A673 (cell line): ENCODE measurements at regions of chr7 and their contacts with region 1.

Region 1: DNA sequence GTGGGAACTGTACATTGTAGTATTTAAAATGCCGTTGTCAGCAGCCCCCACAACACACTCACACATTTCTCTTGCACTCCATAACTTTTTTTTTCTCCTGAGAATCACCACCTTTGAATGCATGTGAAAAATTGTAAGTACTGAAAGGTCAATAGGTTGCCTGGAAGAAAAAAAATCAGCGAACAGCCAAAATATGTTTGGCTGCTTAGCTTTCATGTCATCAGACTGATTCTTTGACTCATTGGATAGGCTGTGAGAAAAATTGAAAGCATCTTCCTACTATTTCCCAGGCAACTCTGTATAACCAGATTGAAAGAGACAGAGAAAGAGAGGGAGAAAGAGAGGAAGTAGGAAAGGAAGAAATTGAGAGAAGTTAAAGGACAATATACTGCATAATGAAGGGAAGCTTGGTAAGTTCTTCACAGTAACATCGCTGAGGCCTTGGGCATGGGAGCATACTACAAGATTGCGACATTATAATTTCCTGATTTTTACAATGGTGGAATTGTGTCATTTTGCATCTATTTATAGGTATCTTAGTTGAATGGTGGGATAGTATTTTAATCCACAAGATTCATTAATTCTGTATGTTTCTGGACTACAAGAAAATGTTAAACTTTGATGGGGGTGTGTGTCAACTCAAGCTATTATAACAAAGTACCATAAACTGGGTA is 249.3 kb upstream of the KCND2 start:
- DNase-seq: no peak
- H3K4me3 ChIP-seq: no peak overlapping the region
- H3K27ac ChIP-seq: no peak overlapping the region
- H3K4me1 ChIP-seq: no peaks in the 10 kb centered on the region
- H3K27me3 ChIP-seq: no peaks in the 10 kb centered on the region
- CTCF ChIP-seq: no peak

Region 2: DNA sequence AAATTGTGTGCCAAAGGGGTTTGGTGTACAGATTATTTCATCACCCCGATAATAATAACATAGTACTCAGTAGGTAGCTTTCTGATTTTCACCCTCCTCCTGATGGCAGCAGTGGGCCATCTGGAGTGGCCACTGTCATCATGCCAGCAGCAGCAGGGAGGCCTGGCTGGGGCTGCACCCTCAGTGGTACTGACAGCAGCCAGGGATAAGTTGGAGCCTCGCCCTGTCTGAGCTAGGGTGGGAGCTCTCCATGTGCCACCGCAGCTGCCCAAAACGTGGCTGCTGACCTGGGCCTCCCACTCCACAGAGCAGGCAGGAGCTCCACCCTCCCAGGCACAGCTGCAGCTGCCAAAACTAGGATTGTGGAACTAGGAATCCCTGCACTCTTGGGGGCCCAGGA is 451.5 kb before region 1 on chr7:
- CTCF ChIA-PET with region 1: no interaction called
- POLR2A ChIA-PET with region 1: no interaction called
- intact Hi-C with region 1: no loop called
- DNase-seq: no peak
- H3K4me3 ChIP-seq: no peak overlapping the region
- H3K27ac ChIP-seq: no peak overlapping the region
- H3K4me1 ChIP-seq: no peaks in the 10 kb centered on the region
- H3K27me3 ChIP-seq: no peaks in the 10 kb centered on the region
- CTCF ChIP-seq: no peak

Region 3: GRCh38 chr7:119964788-119965542 is 58.7 kb before region 1 on chr7:
- CTCF ChIA-PET with region 1: no interaction called
- POLR2A ChIA-PET with region 1: no interaction called
- intact Hi-C with region 1: loop called (anchors 10 kb)
- DNase-seq: no peak
- H3K4me3 ChIP-seq: no peak overlapping the region
- H3K27ac ChIP-seq: no peak overlapping the region
- H3K4me1 ChIP-seq: peaks cover 3% of the 10 kb centered on the region
- H3K27me3 ChIP-seq: no peaks in the 10 kb centered on the region
- CTCF ChIP-seq: no peak

Region 4: DNA sequence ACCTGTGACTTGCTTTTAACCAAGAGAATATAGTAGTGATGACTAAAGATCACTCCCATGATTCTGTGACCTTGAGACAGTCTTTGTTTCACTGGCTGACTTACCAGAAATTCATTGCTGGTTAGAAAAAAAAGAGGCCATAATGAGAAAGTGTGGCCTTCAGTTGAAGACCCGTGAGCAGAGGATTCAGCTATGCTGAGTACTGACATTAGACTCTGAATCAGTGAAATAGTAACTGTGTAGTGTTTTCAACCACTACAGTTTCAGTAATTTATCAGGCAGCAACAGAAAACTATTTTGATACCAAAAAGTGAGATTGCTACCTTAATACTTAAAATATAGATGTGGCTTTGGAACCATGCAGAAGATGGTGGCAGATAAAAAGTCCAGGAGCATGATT is 48.7 kb before region 1 on chr7:
- CTCF ChIA-PET with region 1: no interaction called
- POLR2A ChIA-PET with region 1: no interaction called
- intact Hi-C with region 1: no loop called
- DNase-seq: no peak
- H3K4me3 ChIP-seq: no peak overlapping the region
- H3K27ac ChIP-seq: no peak overlapping the region
- H3K4me1 ChIP-seq: no peaks in the 10 kb centered on the region
- H3K27me3 ChIP-seq: no peaks in the 10 kb centered on the region
- CTCF ChIP-seq: no peak